Ascending aorta (tissue), 2 donors: ENCODE measurements at regions of chr4 and their contacts with region 1.

Region 1: GRCh38 chr4:173505924-173506518 is 24.0 kb downstream of the HAND2 start:
- DNase-seq: peak in 1 of 2 donors; percentile 85
- H3K4me3 ChIP-seq: peak overlapping the region in 1 of 2 donors; percentile 0
- H3K27ac ChIP-seq: peak overlapping the region in 1 of 2 donors; percentile 4
- H3K4me1 ChIP-seq: peaks cover 0 to 12% of the 10 kb centered on the region in 2 donors
- H3K27me3 ChIP-seq: no peaks in the 10 kb centered on the region
- CTCF ChIP-seq: peak; percentile 66 to 89 (median 82)

Region 2: DNA sequence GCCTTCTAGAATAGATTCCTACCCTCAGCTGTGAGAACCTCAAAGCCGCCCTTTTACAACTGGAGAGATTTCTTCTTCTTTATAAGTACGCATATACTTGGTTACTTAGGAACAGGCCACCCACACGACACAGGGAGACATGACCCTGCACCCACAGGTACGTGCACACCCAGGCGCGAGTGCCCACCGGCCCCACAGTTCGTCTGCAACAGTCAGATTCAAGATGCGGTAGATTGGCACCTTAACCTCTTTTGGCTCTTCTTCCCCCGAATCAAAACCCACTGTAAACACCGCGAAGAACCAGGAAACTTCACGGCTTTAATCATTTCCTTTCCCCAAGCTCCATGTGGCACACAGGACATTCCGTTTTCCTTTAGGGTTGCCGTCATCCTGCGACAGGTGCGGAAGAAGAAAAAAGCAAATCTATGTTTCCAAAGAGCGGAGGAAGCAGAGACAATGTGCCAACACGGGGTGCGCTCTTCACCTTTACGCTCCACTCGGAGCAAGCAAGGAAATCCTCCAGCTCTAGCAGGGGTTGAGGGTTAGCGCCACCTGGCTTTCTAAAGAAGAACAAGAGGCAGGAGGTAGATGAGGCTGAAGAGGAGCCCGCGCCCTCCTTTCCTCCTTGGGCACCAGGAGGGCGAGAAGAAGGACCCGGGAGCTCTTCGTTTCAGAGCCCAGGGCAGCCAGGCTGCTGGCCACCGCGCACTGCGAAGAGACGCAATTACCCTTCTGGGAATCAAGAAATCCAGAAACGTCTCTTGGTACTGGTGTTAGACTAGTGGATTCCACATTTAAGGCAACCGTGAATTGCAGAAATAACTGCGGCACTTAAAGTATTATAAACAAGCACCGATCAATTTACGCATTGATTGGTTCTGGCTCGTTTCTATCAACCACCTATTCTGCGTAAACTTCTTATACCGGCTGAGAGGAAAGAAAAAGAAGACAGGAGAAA is 11.7 kb before region 1 on chr4:
- intact Hi-C with region 1: no loop called
- DNase-seq: peak in 1 of 2 donors; percentile 81
- H3K4me3 ChIP-seq: peak overlapping the region; percentile 56 to 63
- H3K27ac ChIP-seq: no peak overlapping the region
- H3K4me1 ChIP-seq: peaks cover 0 to 17% of the 10 kb centered on the region in 2 donors
- H3K27me3 ChIP-seq: no peaks in the 10 kb centered on the region
- CTCF ChIP-seq: peak; percentile 67 to 87 (median 76)

Region 3: DNA sequence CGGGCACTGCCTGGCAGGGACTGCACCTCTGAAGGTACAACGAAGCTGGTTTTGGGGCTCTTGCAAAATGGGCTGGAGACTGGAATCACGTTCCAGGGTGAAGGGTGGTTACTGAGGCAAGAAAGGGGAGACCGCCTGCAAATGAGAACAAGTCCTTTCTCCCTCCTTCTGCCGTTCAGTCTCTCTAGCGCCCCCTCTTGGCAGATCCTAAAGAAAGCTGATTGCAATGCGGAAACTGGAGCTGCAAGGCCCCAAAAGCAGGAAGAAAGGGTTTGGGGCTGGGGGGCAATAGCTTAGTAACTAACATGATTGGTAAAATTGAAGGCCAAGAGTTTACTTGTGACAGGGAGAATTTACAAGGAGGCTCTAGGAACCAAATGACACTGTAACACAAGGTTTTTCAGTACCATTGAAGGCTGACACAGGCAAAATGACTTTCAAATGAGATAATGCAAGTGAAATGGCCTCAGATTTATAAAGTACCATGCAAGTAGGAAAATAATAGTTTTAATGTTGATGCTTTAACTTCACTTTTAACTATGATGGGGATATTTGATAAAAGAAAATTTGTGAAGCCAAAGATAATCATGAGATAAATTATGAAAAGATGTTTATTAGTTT is 246.7 kb after region 1 on chr4:
- intact Hi-C with region 1: loop called (anchors 1 kb)
- DNase-seq: no peak
- H3K4me3 ChIP-seq: no peak overlapping the region
- H3K27ac ChIP-seq: no peak overlapping the region
- H3K4me1 ChIP-seq: no peaks in the 10 kb centered on the region
- H3K27me3 ChIP-seq: no peaks in the 10 kb centered on the region
- CTCF ChIP-seq: peak in 1 of 3 experiments; percentile 29

Region 4: DNA sequence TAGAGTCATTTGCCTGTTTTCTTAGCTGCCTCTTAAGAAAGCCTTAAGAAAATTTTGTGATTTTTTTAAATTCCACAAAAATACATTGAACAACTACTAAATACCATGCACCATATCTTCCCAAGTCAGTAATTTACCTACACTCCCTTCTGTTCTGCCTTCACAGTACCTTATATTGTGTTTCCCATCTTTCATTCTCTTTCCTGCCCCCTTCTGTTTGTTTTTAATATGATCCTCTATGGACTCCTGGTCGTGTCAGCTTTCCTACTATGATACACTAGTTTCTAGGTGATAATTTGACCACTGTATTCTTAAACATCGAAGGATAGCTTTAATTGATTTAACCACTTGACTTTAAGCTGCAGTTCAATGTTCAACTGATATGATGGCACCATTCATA is 321.7 kb after region 1 on chr4:
- intact Hi-C with region 1: loop called (anchors 2 kb)
- DNase-seq: no peak
- H3K4me3 ChIP-seq: no peak overlapping the region
- H3K27ac ChIP-seq: no peak overlapping the region
- H3K4me1 ChIP-seq: no peaks in the 10 kb centered on the region
- H3K27me3 ChIP-seq: no peaks in the 10 kb centered on the region
- CTCF ChIP-seq: no peak

Region 5: DNA sequence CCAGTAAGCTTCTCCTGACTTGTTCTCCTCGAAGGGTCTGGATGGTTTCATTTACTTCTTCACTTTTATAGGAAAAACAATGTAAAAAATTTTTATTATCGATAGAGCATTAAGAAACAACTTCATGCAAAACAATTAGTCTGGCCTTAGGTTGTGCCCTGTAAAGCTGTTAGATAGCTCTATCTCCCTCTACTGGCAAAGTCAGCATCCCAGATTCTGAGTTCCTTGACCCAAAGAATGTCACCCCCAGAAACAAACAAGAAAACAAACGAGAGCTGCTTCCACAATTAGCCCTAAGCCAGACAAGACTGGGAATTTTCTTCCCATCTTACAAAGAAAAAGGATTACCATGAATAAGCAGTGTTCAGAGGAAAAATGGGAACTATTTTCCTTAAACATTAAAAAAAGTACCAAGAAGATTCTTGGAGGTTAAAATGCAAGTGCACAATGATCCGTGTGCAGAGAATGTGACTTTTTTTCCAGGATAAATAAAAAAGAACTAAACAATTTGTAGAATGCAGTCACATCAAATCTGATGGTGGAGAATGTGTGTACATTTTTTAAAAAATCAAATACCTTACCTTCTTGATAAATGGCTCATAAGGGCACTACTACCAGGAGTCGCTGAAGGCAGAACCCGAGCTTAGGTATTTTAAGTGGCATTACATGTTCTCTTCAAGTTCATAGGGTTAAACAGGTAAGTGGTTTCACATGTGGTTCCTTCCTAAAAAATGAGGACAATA is 484.3 kb after region 1 on chr4:
- intact Hi-C with region 1: loop called (anchors 2 kb)
- DNase-seq: no peak
- H3K4me3 ChIP-seq: no peak overlapping the region
- H3K27ac ChIP-seq: no peak overlapping the region
- H3K4me1 ChIP-seq: no peaks in the 10 kb centered on the region
- H3K27me3 ChIP-seq: no peaks in the 10 kb centered on the region
- CTCF ChIP-seq: peak; percentile 17 to 66 (median 55)

Region 6: DNA sequence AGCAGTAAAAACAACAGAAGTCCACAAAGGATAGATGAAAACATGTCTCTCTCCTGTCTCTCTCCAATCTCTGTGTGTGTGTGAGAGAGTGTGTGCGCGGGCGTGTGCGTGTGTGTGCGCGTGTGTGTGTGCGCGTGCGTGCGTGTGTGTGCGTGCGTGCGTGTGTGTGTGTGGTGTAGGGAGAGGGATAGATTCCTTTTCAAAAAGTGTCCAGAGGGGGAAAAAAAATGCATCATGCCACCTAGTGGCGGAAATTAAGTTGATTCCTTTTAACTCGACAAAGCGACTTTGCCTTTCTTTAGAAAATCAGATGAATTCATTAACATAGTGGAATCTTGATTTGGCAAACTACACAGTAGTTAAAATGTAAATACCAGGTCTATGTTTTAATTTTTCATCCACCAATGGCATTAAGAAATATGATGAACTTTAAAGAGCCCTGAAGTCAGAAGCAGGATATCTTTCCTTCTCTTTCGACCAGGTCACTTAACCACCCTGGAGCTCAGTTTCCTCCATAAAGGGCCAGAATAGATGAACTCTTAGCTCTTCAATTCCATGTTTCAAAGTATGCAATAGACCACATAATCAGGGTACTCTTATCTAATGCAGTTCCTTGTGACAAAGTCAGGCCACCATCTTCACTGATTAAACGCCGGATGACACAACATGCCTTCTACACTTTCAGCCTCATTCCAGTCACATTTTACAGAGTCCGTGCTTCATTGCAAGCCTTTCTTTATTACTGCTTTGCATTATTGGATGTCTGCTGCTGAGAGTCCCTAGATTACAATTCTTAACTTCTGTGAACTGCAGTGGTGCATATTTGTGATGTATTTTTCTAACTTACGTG is 614.6 kb after region 1 on chr4:
- intact Hi-C with region 1: loop called (anchors 5 kb)
- DNase-seq: peak in 1 of 2 donors; percentile 70
- H3K4me3 ChIP-seq: peak overlapping the region; percentile 33 to 53
- H3K27ac ChIP-seq: no peak overlapping the region
- H3K4me1 ChIP-seq: no peaks in the 10 kb centered on the region
- H3K27me3 ChIP-seq: no peaks in the 10 kb centered on the region
- CTCF ChIP-seq: peak; percentile 38 to 61 (median 50)

Region 7: DNA sequence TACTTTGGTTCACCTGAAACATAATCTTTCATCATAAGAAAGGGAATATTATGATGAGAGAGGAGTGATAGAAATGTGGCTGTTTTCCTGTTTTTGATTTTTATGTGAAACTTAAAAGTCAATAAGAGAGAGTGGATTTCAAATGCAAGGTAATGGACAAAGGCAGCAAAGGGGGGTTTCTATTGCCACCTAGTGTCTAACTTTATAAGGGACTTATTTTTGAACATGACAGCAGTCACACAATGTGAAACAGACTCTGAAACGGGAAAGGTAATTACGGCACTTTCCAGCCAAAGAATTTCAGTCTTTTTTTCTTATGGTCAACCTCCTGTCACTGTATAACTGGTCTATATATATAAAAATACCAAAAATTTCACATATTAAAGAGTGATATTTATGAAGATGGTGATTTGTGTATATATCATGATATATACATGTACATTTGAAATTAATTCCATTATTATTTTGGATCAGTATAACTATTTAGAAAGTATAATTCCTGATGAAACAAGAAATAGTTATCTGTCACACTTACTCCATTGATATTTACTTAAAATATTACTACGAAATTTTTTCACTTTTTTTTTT is 650.3 kb after region 1 on chr4:
- intact Hi-C with region 1: loop called (anchors 5 kb)
- DNase-seq: no peak
- H3K4me3 ChIP-seq: no peak overlapping the region
- H3K27ac ChIP-seq: no peak overlapping the region
- H3K4me1 ChIP-seq: no peaks in the 10 kb centered on the region
- H3K27me3 ChIP-seq: no peaks in the 10 kb centered on the region
- CTCF ChIP-seq: peak; percentile 20 to 68 (median 58)

Region 8: DNA sequence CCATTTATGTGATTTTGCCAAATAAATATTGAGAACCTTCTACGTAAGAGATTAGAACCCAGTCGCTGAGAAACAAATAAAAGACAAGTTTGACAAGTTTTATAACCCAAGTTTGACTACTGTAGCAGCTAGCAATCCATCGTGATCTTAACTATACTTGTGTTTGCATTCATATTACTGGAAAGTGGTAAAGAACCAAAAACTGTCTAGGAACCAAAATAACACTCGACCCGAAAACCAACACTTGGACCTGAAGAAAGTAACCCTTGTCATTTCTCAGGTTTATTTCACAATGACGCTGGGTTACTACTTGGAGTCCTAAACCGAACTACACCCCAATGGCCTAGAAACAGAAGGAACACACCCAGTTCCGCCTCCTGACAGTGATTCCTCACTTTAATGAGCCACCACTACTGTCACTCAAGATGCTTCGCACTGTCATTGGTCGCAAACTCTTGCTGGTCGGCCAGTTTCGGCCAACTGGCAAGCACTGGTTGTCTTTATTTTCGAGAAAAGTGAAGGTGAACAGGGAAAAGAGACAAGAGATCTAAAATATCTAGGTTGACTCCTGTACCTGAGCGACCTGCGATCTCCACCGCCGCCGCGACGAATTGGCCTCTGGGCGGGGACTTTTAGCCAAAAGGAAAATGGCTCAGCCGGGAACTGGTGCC is 777.0 kb after region 1 on chr4:
- intact Hi-C with region 1: loop called (anchors 10 kb)
- DNase-seq: peak; percentile 57 to 92
- H3K4me3 ChIP-seq: peak overlapping the region; percentile 84 to 96
- H3K27ac ChIP-seq: peak overlapping the region; percentile 96 to 98
- H3K4me1 ChIP-seq: peaks cover 0 to 13% of the 10 kb centered on the region in 2 donors
- H3K27me3 ChIP-seq: no peaks in the 10 kb centered on the region
- CTCF ChIP-seq: no peak